Naive thymus-derived CD4-positive, alpha-beta T cell (primary cell): ENCODE measurements at regions of chr6 and their contacts with region 1.

Region 1: DNA sequence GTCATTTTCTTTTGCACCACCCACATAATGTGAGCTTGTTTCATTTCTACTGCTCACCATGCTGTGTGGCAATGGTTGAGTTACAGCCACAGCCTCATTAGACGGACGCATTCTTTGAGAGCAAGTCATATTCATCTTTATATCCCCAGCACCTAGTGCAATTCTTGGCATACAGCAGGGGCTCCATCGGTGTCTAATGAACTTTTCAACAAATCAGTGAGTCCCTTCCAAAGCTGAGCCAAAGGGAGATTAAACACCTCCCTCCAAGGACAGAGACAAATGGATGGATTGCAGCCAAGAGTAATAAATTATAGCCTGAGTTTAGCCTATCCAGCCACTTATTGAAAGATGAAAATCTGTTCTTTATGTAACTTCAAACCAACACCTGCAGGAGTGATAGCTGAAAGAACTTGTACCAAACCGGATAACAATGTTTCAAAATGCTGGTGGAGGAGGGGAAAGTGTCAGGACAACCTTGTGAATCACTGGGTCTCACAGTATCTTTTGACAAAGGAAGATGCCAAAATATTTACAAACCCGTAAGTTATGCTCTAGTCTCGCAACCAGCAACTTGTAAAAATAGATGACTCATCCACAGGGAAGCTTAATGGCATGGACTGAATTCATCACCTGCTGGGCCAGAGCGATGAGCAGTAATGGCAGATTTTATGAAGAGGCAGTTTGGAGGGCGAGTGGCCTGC is 139.0 kb downstream of the PXDC1 start:
- DNase-seq: no peak
- ATAC-seq: no peak
- H3K4me3 ChIP-seq: no peak overlapping the region
- H3K4me3 Mint-ChIP-seq: no peak overlapping the region
- H3K27ac ChIP-seq: no peak overlapping the region
- H3K27ac Mint-ChIP-seq: no peak overlapping the region
- H3K4me1 ChIP-seq: no peaks in the 10 kb centered on the region
- H3K4me1 Mint-ChIP-seq: no peaks in the 10 kb centered on the region
- H3K27me3 ChIP-seq: no peaks in the 10 kb centered on the region
- H3K27me3 Mint-ChIP-seq: peaks cover 7 to 17% (median 13%) of the 10 kb centered on the region in 5 donors

Region 2: DNA sequence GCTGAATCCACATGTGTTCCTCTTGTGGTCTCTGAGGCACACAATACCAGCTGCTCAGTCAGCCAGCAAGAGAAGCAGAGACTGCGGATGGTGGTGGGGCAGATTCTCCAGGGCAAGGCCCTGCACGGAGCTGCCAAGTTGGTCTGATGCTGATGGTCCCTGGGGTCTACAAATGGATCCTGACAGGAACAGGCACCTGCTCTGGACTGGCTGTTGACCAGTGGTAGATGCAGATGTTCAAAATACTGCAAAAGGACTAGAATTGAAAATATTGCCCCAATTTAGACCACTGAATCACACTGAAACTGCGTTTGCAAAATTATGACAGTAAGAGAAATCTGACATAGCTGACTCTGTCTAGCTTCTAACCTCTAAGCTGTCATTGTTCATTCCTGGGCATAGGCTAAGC is 425.5 kb before region 1 on chr6:
- CTCF ChIA-PET with region 1: no interaction called
- POLR2A ChIA-PET with region 1: no interaction called
- intact Hi-C with region 1: loop called in 1 of 2 experiments (anchors 5 kb)
- DNase-seq: no peak
- ATAC-seq: no peak
- H3K4me3 ChIP-seq: no peak overlapping the region
- H3K4me3 Mint-ChIP-seq: no peak overlapping the region
- H3K27ac ChIP-seq: no peak overlapping the region
- H3K27ac Mint-ChIP-seq: no peak overlapping the region
- H3K4me1 ChIP-seq: no peaks in the 10 kb centered on the region
- H3K4me1 Mint-ChIP-seq: peaks cover 0 to 1% (median 0%) of the 10 kb centered on the region in 7 donors
- H3K27me3 ChIP-seq: no peaks in the 10 kb centered on the region
- H3K27me3 Mint-ChIP-seq: peaks cover 0 to 20% (median 6%) of the 10 kb centered on the region in 5 donors

Region 3: GRCh38 chr6:3566812-3567211 is 45.7 kb before region 1 on chr6:
- CTCF ChIA-PET with region 1: no interaction called
- POLR2A ChIA-PET with region 1: no interaction called
- intact Hi-C with region 1: no loop called
- DNase-seq: no peak
- ATAC-seq: no peak
- H3K4me3 ChIP-seq: no peak overlapping the region
- H3K4me3 Mint-ChIP-seq: no peak overlapping the region
- H3K27ac ChIP-seq: no peak overlapping the region
- H3K27ac Mint-ChIP-seq: no peak overlapping the region
- H3K4me1 ChIP-seq: no peaks in the 10 kb centered on the region
- H3K4me1 Mint-ChIP-seq: peaks cover 0 to 4% (median 0%) of the 10 kb centered on the region in 7 donors
- H3K27me3 ChIP-seq: no peaks in the 10 kb centered on the region
- H3K27me3 Mint-ChIP-seq: peaks cover 0 to 12% (median 5%) of the 10 kb centered on the region in 5 donors